ENCODE measurements at regions of chr2 and their contacts with region 1.

Region 1: DNA sequence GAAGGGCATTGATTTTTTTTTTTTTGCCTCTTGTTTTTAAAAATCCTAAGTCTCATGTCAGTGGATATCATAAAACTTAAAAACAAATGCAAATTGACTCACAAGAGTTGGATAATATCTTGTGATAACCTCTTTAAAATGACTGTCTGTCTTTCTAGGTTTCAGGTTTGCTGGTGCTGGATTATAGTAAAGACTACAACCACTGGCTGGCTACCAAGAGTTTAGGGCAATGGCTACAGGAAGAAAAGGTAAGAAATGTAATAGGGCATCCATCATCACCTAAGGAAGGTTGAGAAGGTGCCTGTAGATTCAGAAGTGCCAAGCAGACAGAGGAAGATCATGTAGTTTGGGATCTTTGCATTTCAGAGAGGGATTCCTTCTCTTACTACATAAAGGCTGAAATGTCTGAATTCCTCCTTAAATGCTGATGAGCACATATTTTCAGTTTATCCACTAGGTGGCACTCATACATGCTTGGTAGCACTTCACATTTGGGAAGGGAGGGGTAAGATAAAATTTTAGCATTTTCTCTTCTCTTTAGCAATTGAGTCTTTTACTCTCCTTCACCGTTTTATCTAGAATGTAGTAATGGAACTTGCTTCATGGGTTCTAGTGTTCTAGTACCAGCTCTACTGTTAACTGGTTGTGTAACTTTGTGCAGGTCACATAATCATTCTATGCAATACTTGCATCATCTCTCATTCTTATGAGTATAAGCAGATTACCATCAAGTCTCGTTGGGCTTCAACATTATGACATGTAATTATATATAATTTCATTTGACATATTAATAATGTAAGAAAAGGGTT is 21.1 kb downstream of the CPS1 start:
- DNase-seq: peak in 5 of 9 donors; percentile 6 to 31 (median 19)
- ATAC-seq: peak; percentile 48
- H3K4me3 ChIP-seq: no peak overlapping the region
- H3K4me3 Mint-ChIP-seq: no peak overlapping the region
- H3K27ac ChIP-seq: no peak overlapping the region
- H3K27ac Mint-ChIP-seq: no peak overlapping the region
- H3K4me1 ChIP-seq: no peaks in the 10 kb centered on the region
- H3K4me1 Mint-ChIP-seq: peaks cover 0 to 5% (median 0%) of the 10 kb centered on the region in 7 donors
- H3K27me3 ChIP-seq: no peaks in the 10 kb centered on the region
- H3K27me3 Mint-ChIP-seq: peaks cover 0 to 3% (median 0%) of the 10 kb centered on the region in 5 donors

Region 2: DNA sequence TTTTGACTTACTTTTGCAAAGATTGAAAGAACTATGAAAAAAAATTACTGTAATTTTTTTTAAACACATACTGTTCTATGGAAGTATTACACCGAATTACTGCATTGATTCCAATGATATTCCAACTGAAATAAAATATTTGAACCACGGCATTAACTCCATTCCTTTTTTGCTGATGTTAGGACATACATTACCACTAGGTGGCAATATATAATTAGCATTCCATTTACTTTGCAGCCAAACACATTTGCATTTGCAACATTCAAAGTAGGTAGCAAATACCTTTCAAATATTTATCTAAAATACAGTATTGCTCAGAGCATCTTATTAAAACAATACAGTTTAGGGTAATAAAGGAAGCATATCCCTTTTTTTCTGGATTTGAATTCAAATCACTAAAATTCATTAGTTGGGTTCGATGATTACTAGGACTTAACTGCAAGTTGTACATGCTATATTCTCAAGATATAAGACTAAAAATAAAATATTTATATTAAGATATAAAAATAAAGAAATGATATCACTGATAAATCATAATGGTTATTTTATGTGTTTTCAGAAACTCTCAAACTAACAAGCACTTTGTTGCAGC is 132.3 kb before region 1 on chr2:
- CTCF ChIA-PET with region 1: no interaction called
- POLR2A ChIA-PET with region 1: no interaction called
- intact Hi-C with region 1: loop called in 1 of 2 experiments (anchors 10 kb)
- DNase-seq: peak in 5 of 9 donors; percentile 5 to 26 (median 20)
- ATAC-seq: peak; percentile 52
- H3K4me3 ChIP-seq: no peak overlapping the region
- H3K4me3 Mint-ChIP-seq: no peak overlapping the region
- H3K27ac ChIP-seq: no peak overlapping the region
- H3K27ac Mint-ChIP-seq: no peak overlapping the region
- H3K4me1 ChIP-seq: no peaks in the 10 kb centered on the region
- H3K4me1 Mint-ChIP-seq: peaks cover 10 to 34% (median 28%) of the 10 kb centered on the region in 7 donors
- H3K27me3 ChIP-seq: no peaks in the 10 kb centered on the region
- H3K27me3 Mint-ChIP-seq: no peaks in the 10 kb centered on the region

Measured in naive thymus-derived CD4-positive, alpha-beta T cell (primary cell).